HepG2 (cell line): ENCODE measurements at regions of chr11 and their contacts with region 1.

Region 1: GRCh38 chr11:64317957-64318693 is at the start of gene PRDX5:
- DNase-seq: peak; percentile 94
- ATAC-seq: peak; percentile 81
- H3K4me3 ChIP-seq: peak within 1 kb of the TSS; percentile 97 to 99 (median 99)
- H3K27ac ChIP-seq: peak within 1 kb of the TSS; percentile 98
- H3K4me1 ChIP-seq: peaks cover 22% of the 10 kb centered on the region
- H3K27me3 ChIP-seq: no peaks in the 10 kb centered on the region; a peak in 1 of 5 replicates
- CTCF ChIP-seq: peak; percentile 85
- EP300 ChIP-seq: 0 out of 4 replicates have a peak, but pooled peaks of 1 of the 2 experiments have one; percentile 5
- POLR2A ChIP-seq: peak in 1 of 2 experiments; percentile 83
- RAD21 ChIP-seq: peak; percentile 80
- total RNA-seq, gene PRDX5: 215 and 266 TPM in 2 replicates

Region 2: DNA sequence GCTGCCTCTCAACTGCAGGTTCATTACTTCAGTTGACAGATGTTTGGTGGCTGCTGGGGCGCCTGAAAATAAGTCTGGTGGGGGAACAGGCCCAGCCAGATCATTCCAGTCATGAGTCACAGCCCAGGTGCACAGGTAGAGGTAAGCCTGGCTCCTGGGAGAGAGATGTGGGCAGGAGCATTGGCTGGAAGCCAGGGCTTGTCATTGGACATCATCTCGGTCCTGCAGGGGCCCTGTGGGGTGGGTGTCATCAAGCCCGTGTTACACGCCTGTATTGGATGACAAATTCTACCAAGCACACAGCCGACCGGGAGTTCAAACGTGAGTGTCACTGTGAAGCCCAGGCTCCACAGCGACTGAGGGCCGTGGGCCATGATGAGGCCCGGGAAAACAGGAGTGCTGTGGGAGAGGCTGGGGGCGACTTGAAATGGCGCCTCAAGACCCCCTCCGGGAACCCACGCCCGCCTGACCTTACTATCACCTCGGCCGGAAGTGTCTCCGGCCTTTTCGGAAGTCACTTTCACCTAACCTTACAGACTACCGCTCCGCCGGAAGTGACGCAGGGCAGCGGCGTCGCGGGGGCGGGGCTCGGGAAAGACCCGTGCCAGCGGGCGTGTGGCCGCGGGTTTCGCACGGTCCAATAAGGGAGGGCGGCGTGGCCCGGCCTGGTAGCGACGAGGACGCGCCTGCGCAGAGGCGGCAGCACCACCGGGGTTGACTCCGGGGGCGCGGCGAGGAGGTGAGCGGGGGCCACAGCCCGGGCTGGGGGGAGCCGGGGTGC is 77.5 kb before region 1 on chr11 and contains the start of gene FKBP2:
- CTCF ChIA-PET with region 1: no interaction called
- POLR2A ChIA-PET with region 1: interaction called, 15 read pairs
- in situ Hi-C with region 1: no loop called
- intact Hi-C with region 1: no loop called
- DNase-seq: peak; percentile 93
- ATAC-seq: peak; percentile 46
- H3K4me3 ChIP-seq: peak within 1 kb of the TSS; percentile 84 to 93 (median 88)
- H3K27ac ChIP-seq: peak within 1 kb of the TSS; percentile 91
- H3K4me1 ChIP-seq: peaks cover 67% of the 10 kb centered on the region
- H3K27me3 ChIP-seq: no peaks in the 10 kb centered on the region; a peak in 1 of 5 replicates
- CTCF ChIP-seq: no peak
- EP300 ChIP-seq: no peak
- POLR2A ChIP-seq: peak in 1 of 2 experiments; percentile 88; a peak in 2 of 4 replicates
- RAD21 ChIP-seq: no peak
- total RNA-seq, gene FKBP2: 29.4 and 53.3 TPM in 2 replicates

Region 3: GRCh38 chr11:64284048-64284961 is 33.8 kb before region 1 on chr11 and contains the start of gene BAD:
- CTCF ChIA-PET with region 1: no interaction called
- POLR2A ChIA-PET with region 1: interaction called, 14 read pairs
- in situ Hi-C with region 1: no loop called
- intact Hi-C with region 1: no loop called
- DNase-seq: peak; percentile 86
- ATAC-seq: peak; percentile 92
- H3K4me3 ChIP-seq: peak within 1 kb of the TSS; percentile 69 to 97 (median 83)
- H3K27ac ChIP-seq: peak within 1 kb of the TSS; percentile 79
- H3K4me1 ChIP-seq: peaks cover 22% of the 10 kb centered on the region; the same call in 1 of the 2 replicates
- H3K27me3 ChIP-seq: no peaks in the 10 kb centered on the region; a peak in 1 of 5 replicates
- CTCF ChIP-seq: no peak
- EP300 ChIP-seq: no peak
- POLR2A ChIP-seq: peak in 1 of 2 experiments; percentile 10; a peak in 2 of 4 replicates
- RAD21 ChIP-seq: no peak
- total RNA-seq, gene BAD: 28.5 and 33.0 TPM in 2 replicates

Region 4: GRCh38 chr11:64304316-64305072 is 13.6 kb before region 1 on chr11:
- CTCF ChIA-PET with region 1: no interaction called
- POLR2A ChIA-PET with region 1: interaction called, 103 read pairs
- in situ Hi-C with region 1: no loop called
- intact Hi-C with region 1: no loop called
- DNase-seq: peak; percentile 80
- ATAC-seq: peak; percentile 55
- H3K4me3 ChIP-seq: peak overlapping the region; percentile 51 to 79 (median 70)
- H3K27ac ChIP-seq: peak overlapping the region; percentile 94
- H3K4me1 ChIP-seq: peaks cover 66% of the 10 kb centered on the region
- H3K27me3 ChIP-seq: peaks cover 3 to 13% of the 10 kb centered on the region in 2 experiments; a peak in 4 of 5 replicates
- CTCF ChIP-seq: peak; percentile 95
- EP300 ChIP-seq: no peak
- POLR2A ChIP-seq: peak in 1 of 2 experiments; percentile 62; a peak in 2 of 4 replicates
- RAD21 ChIP-seq: peak; percentile 48; the same call in 1 of the 2 replicates

Region 5: GRCh38 chr11:64331557-64332371 is 13.6 kb after region 1 on chr11:
- CTCF ChIA-PET with region 1: no interaction called
- POLR2A ChIA-PET with region 1: interaction called, 33 read pairs
- in situ Hi-C with region 1: no loop called
- intact Hi-C with region 1: no loop called
- DNase-seq: peak; percentile 69
- ATAC-seq: peak; percentile 91
- H3K4me3 ChIP-seq: peak overlapping the region; percentile 1 to 68 (median 5); a peak in 5 of 6 replicates
- H3K27ac ChIP-seq: no peak overlapping the region
- H3K4me1 ChIP-seq: peaks cover 27% of the 10 kb centered on the region
- H3K27me3 ChIP-seq: peaks cover 3 to 7% of the 10 kb centered on the region in 2 experiments; a peak in 3 of 5 replicates
- CTCF ChIP-seq: peak; percentile 79
- EP300 ChIP-seq: no peak
- POLR2A ChIP-seq: no peak
- RAD21 ChIP-seq: peak; percentile 75

Region 6: DNA sequence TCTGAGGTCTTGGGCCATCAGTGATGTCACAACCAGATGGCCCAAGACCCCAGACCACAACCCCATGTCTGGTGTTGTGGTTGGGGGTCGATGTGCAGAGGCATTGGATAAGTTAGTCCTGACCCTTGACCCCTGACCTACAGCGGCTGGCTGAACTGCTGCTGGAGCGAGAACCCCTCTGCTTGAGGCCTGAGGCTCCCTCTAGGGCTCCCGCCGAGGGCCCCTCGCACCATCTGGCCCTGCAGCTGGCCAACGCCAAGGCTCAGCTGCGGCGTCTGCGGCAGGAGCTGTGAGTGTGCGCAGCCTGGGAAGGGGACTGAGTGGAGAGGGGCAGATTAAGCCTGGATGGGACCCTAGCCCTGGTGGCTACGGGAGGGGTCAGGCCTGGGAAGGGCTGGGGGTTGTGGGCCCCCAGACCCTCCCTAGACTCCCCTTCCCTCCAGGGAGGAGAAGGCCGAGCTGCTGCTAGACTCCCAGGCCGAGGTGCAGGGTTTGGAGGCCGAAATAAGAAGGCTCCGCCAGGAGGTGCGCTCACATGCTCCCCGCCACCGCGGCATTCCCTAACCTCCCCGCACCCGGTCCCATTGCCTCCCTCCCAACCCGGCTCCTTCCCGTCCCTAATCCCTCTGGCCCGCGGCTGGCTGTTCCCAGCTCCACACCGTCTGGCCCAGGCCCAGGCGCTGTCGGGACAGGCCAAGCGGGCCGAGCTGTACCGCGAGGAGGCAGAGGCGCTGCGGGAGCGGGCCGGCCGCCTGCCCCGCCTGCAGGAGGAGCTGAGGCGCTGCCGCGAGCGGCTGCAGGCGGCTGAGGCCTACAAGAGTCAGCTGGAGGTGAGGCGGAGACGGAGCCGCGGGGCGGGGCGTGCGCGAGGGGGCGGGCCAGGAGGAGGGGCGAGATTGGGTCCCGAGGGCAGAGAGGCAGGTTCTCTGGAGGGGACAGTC is 24.0 kb after region 1 on chr11:
- CTCF ChIA-PET with region 1: no interaction called
- POLR2A ChIA-PET with region 1: interaction called, 13 read pairs
- in situ Hi-C with region 1: no loop called
- intact Hi-C with region 1: no loop called
- DNase-seq: peak; percentile 63
- ATAC-seq: peak; percentile 84
- H3K4me3 ChIP-seq: peak overlapping the region in 2 of 3 experiments; percentile 46 to 64; a peak in 4 of 6 replicates
- H3K27ac ChIP-seq: no peak overlapping the region
- H3K4me1 ChIP-seq: peaks cover 36% of the 10 kb centered on the region
- H3K27me3 ChIP-seq: peaks cover 3 to 43% of the 10 kb centered on the region in 2 experiments; a peak in 4 of 5 replicates
- CTCF ChIP-seq: peak; percentile 60
- EP300 ChIP-seq: no peak
- POLR2A ChIP-seq: no peak
- RAD21 ChIP-seq: peak; percentile 49; the same call in 1 of the 2 replicates

Region 7: GRCh38 chr11:64358907-64359711 is 41.0 kb after region 1 on chr11 and contains the start of gene RPS6KA4:
- CTCF ChIA-PET with region 1: interaction called, 4 read pairs
- POLR2A ChIA-PET with region 1: interaction called, 61 read pairs
- in situ Hi-C with region 1: no loop called
- intact Hi-C with region 1: loop called (anchors 2 kb)
- DNase-seq: no peak
- ATAC-seq: peak; percentile 78
- H3K4me3 ChIP-seq: peak within 1 kb of the TSS; percentile 80 to 96 (median 94)
- H3K27ac ChIP-seq: peak within 1 kb of the TSS; percentile 59
- H3K4me1 ChIP-seq: peaks cover 48% of the 10 kb centered on the region
- H3K27me3 ChIP-seq: no peaks in the 10 kb centered on the region; a peak in 1 of 5 replicates
- CTCF ChIP-seq: no peak
- EP300 ChIP-seq: no peak
- POLR2A ChIP-seq: no peak; a peak in 1 of 4 replicates
- RAD21 ChIP-seq: peak; percentile 14; the same call in 1 of the 2 replicates
- total RNA-seq, gene RPS6KA4: 8.9 and 14.2 TPM in 2 replicates